ENCODE measurements at regions of chr9 and their contacts with region 1.

Region 1: DNA sequence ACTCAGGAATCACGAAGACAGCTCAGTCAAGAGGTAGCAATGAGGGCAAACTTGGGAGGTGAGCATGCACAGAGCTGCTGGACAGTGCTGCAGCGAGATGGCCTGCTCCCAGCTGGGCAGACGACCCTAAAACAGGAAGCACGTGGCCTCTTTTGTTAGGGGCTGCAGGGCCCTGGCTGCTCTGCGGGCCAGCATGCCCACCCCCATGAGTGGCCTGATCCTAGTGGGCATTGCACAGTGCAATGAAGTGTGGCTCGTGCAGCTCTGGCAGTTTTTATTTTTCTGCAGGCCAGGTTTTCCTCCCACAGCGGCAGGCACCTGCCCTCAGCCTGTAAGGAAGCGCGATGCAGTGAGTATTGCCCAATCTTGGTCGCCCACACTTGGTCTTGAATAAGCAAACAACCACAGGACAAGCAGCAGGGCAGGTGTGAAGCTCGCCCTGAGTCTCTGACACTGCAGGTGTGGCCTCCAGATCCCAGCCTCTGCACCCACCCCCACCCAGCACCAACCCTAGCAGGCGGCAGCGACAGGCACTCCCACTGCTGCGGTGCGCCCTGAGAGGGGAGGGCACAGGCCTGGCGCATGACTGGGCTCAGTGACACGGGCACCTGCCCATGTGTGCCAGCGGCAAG is 60.8 kb downstream of the SEMA4D start:
- DNase-seq: no peak
- H3K4me3 Mint-ChIP-seq: peak overlapping the region; percentile 15
- H3K27ac Mint-ChIP-seq: peak overlapping the region; percentile 80
- H3K4me1 Mint-ChIP-seq: peaks cover 78% of the 10 kb centered on the region
- H3K27me3 Mint-ChIP-seq: no peaks in the 10 kb centered on the region

Region 2: GRCh38 chr9:89461265-89461664 is 24.1 kb after region 1 on chr9:
- intact Hi-C with region 1: loop called (anchors 2 kb)
- DNase-seq: no peak
- H3K4me3 Mint-ChIP-seq: peak overlapping the region; percentile 40
- H3K27ac Mint-ChIP-seq: peak overlapping the region; percentile 79
- H3K4me1 Mint-ChIP-seq: peaks cover 92% of the 10 kb centered on the region
- H3K27me3 Mint-ChIP-seq: no peaks in the 10 kb centered on the region

Measured in activated T-helper 1 cell treated with anti-CD3 and anti-CD28 coated beads, Interleukin-12 subunit alpha, Interleukin-12 subunit beta, Interleukin-2, Interleukin-4 antibody, amounts not matched to agents 30 ng/mL and 10 ng/mL and 1 ng/mL, durations not matched to agents 14 hours and 24 hours and 36 hours (primary cell).